Cardiac septum (tissue), 1 donor: ENCODE measurements at regions of chr3 and their contacts with region 1.

Region 1: GRCh38 chr3:177359593-177360357 is 162.5 kb upstream of the TBL1XR1 start:
- DNase-seq: peak; percentile 97

Region 2: GRCh38 chr3:176953106-176954060 is 406.4 kb before region 1 on chr3:
- intact Hi-C with region 1: loop called (anchors 5 kb)
- DNase-seq: peak; percentile 84

Region 3: GRCh38 chr3:177197041-177197727 is 162.6 kb before region 1 on chr3 and contains the start of gene TBL1XR1:
- intact Hi-C with region 1: loop called (anchors 1 kb)
- DNase-seq: peak; percentile 96
- total RNA-seq, gene TBL1XR1: 164 TPM

Region 4: DNA sequence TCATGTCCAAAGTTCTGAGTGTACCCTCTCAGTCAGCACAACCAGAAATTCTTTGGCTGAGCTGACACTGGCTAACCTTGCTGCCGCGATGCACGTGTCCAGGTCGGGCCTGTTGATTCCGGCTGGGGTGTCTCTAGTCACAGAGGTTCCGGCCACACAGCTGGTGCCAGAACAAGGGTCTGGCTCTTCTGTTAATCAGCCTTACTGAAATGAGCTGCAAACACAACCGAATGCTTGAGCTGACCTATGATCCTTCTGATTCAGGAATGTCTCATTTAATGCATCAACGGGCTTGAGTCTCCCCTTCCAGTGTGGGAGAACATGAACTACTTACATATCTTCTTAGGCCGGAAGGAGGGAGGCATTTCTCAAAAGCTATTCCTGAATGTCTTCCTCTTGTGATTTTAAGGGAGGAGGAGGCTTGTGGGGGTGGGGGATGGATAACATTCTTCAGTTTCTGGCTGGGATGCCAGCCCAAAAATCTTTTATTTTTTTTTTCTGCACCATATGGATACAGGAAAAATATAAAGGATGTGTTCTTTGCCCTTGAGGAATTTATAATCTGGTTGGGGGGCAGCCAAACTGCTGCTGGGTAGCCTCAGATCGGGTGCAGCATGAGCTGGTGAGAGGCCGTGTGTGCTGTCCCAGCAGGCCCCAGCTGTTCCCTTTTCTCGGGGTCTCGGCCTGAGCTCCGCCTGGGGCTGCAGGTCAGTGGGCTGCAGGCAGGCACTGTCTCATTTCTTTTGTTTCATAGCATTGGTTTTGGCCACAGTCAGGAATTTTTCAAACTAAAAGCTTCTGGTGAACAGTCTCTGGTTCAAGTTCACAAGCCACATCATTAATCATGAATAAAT is 156.6 kb after region 1 on chr3:
- intact Hi-C with region 1: loop called (anchors 5 kb)
- DNase-seq: peak; percentile 80

Region 5: GRCh38 chr3:177777699-177778098 is 417.9 kb after region 1 on chr3:
- intact Hi-C with region 1: loop called (anchors 5 kb)
- DNase-seq: no peak

Region 6: GRCh38 chr3:178385280-178385952 is 1025.6 kb after region 1 on chr3:
- intact Hi-C with region 1: loop called (anchors 5 kb)
- DNase-seq: no peak